H1 (cell line): ENCODE measurements at regions of chr11 and their contacts with region 1.

Region 1: GRCh38 chr11:19903620-19904069 is 191.0 kb downstream of the NAV2 start:
- DNase-seq: peak; percentile 23 to 90
- H3K4me3 ChIP-seq: no peak overlapping the region
- H3K27ac ChIP-seq: no peak overlapping the region
- H3K4me1 ChIP-seq: peaks cover 0 to 8% (median 4%) of the 10 kb centered on the region in 4 experiments; a peak in 4 of 7 replicates
- H3K27me3 ChIP-seq: no peaks in the 10 kb centered on the region
- CTCF ChIP-seq: peak; percentile 54 to 87 (median 79)
- EP300 ChIP-seq: no peak
- POLR2A ChIP-seq: no peak
- RAD21 ChIP-seq: peak; percentile 93 to 95

Region 2: DNA sequence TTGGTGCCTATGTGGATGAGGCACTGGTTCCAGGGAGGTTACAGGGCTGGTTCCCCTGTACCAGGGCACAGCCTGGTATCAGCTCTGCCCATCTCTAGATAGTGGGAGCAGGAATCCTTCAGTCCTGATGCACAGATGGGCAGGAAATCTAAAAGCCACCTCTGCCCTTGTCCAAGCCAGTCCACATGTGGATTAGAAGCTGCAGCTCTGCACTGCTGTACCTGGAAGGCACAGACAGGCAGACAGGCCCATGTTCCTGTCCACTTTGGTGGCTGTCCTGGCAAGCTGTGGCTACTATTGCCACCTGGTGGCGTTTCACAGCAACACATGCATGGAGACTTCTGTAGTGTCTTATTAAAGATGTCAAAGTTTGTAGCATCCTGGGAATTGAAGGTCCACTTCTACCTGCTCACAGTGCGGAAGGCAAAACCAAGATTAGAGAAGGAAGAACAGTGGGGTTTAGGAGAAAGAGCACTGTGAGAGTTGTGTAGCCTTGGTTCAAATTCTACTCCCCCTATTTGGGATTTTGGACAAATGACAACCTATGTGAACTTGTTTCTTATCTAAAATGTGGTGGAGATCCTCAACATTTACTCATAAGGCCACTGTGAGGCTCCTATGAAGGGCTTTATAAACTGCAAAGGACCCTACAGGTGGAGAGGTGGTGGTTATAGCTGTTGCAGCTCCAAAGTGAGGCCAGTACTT is 160.9 kb before region 1 on chr11:
- CTCF ChIA-PET with region 1: interaction called, 30 read pairs
- POLR2A ChIA-PET with region 1: no interaction called
- DNase-seq: peak; percentile 49 to 84
- H3K4me3 ChIP-seq: no peak overlapping the region
- H3K27ac ChIP-seq: no peak overlapping the region
- H3K4me1 ChIP-seq: peaks cover 0 to 12% (median 3%) of the 10 kb centered on the region in 4 experiments; a peak in 2 of 7 replicates
- H3K27me3 ChIP-seq: no peaks in the 10 kb centered on the region
- CTCF ChIP-seq: peak; percentile 76 to 97 (median 91)
- EP300 ChIP-seq: no peak
- POLR2A ChIP-seq: no peak
- RAD21 ChIP-seq: peak; percentile 93 to 97

Region 3: DNA sequence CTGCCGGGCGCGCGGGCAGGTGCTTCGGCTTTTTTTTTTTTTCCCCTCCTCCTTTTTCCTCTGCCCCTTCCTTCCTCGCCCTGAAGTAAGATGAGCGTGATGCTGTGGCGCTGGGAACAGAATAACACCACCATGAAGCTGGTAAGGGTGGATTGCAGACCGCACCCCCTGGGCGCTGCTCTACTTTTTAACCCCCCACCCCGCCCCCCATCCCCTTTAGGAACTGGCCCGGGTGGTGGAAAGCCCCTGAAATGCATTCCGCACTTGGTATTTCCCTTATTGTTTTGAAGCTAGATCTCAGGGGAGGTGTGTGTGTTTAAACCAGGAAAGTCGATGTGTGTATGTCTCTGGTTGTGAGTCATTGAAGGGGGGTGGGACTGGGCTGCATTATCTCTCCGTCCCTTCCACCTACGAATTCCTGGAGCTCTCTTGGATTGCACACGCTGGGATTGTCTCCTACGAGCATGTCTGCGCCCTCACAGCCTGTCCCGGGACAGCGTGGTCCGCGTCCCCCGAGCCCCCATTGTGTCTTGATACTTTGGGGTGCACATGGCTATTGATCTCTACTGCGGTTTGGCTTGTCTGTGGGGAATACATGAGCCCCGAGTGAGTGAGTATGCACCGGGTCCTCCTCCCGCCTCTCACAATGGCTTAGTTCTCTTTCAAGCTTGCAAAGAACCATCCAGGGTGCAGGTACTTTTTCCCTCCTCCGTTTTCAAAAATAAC is 126.1 kb before region 1 on chr11:
- CTCF ChIA-PET with region 1: interaction called, 15 read pairs
- POLR2A ChIA-PET with region 1: no interaction called
- DNase-seq: no peak
- H3K4me3 ChIP-seq: peak overlapping the region; percentile 84 to 96 (median 90)
- H3K27ac ChIP-seq: peak overlapping the region; percentile 92
- H3K4me1 ChIP-seq: peaks cover 17 to 43% (median 37%) of the 10 kb centered on the region in 4 experiments
- H3K27me3 ChIP-seq: no peaks in the 10 kb centered on the region
- CTCF ChIP-seq: no peak
- EP300 ChIP-seq: peak in 1 of 2 experiments; percentile 7; a peak in 1 of 3 replicates
- POLR2A ChIP-seq: peak; percentile 78 to 81
- RAD21 ChIP-seq: no peak

Region 4: DNA sequence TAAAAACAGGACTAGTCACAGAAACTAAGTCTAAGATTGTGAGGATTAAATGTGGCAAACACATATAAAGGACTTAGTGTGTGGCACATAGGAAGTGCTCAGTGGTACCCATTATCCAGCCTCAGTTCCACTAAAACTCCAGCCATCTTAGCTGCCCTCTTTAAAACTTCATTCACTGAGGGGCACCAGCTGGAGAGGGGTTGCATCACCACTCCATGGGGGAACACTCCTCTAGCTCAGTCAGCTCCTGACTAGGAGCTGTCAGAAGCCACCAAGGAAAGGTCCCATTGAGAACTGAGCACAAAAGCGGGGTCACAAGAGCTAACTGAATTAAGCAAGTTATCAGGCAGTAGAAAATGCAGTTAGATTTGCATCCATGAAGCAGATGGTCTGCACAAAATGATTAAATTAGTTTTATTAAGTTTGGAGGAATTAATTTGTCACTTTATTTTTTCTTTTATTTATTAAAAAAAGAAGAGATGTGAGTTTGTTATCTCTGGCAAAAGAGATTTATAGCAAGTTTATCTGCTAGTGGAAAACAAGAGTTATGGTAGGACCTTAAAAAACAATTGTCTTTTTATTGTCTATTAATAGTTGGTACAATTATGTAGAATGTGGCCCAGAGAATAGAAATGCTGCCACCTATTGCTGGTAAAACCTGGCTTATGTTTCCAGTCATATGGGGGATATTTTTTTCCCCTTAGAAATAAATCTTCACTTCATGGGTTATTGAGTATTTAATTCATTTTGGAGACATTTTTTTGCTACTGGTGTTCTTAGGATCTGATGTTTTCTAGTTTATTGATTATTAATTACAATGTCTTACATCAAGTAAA is 95.4 kb before region 1 on chr11:
- CTCF ChIA-PET with region 1: interaction called, 88 read pairs
- POLR2A ChIA-PET with region 1: no interaction called
- DNase-seq: no peak
- H3K4me3 ChIP-seq: no peak overlapping the region
- H3K27ac ChIP-seq: no peak overlapping the region
- H3K4me1 ChIP-seq: peaks cover 11 to 31% (median 21%) of the 10 kb centered on the region in 4 experiments; a peak in 6 of 7 replicates
- H3K27me3 ChIP-seq: no peaks in the 10 kb centered on the region
- CTCF ChIP-seq: no peak
- EP300 ChIP-seq: no peak
- POLR2A ChIP-seq: no peak
- RAD21 ChIP-seq: no peak

Region 5: DNA sequence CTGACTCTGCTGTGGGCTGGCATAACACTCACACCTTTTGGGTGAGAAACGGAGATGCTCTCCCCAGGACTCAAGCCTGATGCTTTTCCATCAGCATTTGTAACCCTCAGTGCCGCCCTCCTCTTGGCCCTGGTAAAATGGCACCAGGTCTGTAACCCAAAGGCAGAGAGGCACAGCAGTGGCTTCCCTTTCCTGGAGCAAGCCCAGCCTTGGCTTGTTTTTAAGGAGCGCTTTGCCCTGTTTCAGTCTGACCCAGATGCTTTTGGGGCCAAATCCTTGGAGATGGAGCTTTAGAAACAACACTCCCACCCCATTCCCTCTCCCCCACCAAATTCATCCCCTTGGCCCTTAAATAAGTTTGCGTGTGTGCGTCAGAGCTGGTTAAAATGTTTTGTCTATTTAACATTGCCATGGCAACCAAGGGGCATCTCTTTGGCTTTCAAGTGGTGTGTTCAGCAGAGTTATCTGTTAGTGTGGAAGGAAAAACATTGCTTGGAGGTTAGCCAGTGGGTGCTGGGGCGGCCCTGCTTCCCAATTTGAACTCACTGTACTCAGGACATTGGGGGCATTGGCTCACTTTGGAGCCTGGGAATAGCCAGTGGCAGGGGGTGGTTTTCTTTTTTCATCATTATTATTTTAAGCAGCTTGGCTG is 56.9 kb before region 1 on chr11:
- CTCF ChIA-PET with region 1: interaction called, 24 read pairs
- POLR2A ChIA-PET with region 1: no interaction called
- DNase-seq: no peak
- H3K4me3 ChIP-seq: no peak overlapping the region
- H3K27ac ChIP-seq: no peak overlapping the region
- H3K4me1 ChIP-seq: peaks cover 0 to 12% (median 4%) of the 10 kb centered on the region in 4 experiments; a peak in 4 of 7 replicates
- H3K27me3 ChIP-seq: no peaks in the 10 kb centered on the region
- CTCF ChIP-seq: no peak
- EP300 ChIP-seq: no peak
- POLR2A ChIP-seq: no peak
- RAD21 ChIP-seq: no peak

Region 6: DNA sequence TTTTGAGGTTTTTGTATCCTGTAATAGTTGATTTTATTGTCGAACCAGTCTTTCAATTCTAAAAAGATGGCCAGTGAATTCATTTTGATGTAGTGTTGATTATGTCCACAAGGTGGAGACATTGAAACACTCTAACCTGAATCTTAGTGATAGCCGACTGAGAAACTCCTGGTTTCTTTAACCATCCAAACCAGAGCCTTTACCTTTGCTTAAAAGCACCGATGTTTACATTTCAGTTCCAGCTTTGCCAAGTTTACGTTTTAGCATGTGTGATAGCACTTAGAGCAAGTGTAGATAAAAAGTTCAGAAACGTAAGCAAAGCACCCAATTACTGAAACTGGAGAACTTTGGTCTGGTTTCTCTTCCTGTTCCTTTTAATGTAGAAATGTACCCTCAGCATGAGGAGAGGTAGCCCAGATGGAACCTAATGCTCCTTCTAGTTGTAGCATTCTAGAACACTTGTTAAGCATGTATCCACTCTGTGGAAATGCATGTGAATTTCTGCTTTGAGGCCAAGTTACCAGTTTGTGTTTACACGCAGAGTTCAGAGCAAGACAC is 48.0 kb after region 1 on chr11:
- CTCF ChIA-PET with region 1: interaction called, 10 read pairs
- POLR2A ChIA-PET with region 1: no interaction called
- DNase-seq: no peak
- H3K4me3 ChIP-seq: no peak overlapping the region
- H3K27ac ChIP-seq: no peak overlapping the region
- H3K4me1 ChIP-seq: peaks cover 8 to 21% (median 20%) of the 10 kb centered on the region in 4 experiments; a peak in 6 of 7 replicates
- H3K27me3 ChIP-seq: no peaks in the 10 kb centered on the region
- CTCF ChIP-seq: peak in 2 of 3 experiments; percentile 43 to 65; a peak in 3 of 4 replicates
- EP300 ChIP-seq: no peak
- POLR2A ChIP-seq: no peak
- RAD21 ChIP-seq: peak; percentile 74 to 80

Region 7: DNA sequence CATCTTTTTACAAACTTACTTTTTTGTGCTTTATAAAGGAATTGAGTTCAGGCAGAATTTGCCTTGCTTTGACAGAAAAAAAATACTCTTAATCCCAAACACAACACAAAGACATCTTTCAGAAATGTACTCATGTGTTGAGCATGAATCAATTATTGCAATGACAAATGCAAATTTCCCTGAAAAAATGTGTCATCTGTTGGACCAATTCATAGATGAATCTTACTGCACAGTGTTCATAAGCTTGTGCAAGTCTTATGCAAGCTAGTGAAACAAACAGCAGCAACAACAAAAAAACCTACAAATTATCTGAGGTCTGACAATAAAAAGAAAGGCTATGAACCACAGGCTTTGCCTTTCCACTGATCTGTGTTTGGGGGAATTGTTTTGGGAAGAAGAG is 417.5 kb after region 1 on chr11:
- CTCF ChIA-PET with region 1: no interaction called
- POLR2A ChIA-PET with region 1: no interaction called
- DNase-seq: no peak
- H3K4me3 ChIP-seq: no peak overlapping the region
- H3K27ac ChIP-seq: no peak overlapping the region
- H3K4me1 ChIP-seq: no peaks in the 10 kb centered on the region
- H3K27me3 ChIP-seq: no peaks in the 10 kb centered on the region
- CTCF ChIP-seq: no peak
- EP300 ChIP-seq: no peak
- POLR2A ChIP-seq: no peak
- RAD21 ChIP-seq: no peak

Region 8: DNA sequence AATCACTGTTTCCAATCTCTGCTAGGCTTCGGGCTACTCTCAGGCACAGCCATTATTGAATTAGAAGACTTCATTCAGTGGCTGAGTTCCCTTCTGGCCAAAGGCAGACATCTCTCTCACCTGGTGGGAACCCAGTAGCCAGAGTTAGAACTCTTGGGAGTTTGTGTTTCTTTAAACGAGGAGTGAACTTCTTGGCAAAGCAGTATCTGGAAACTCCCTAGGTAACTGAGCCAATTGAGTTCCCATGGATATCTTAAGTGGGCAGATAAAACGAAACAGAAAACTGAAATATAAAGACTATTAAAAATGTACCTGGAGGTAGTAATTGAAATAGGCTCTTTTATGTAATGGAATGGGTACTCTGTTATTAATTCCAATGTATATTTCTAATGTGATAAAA is 891.4 kb after region 1 on chr11:
- CTCF ChIA-PET with region 1: no interaction called
- POLR2A ChIA-PET with region 1: no interaction called
- DNase-seq: no peak
- H3K4me3 ChIP-seq: no peak overlapping the region
- H3K27ac ChIP-seq: no peak overlapping the region
- H3K4me1 ChIP-seq: peaks cover 0 to 2% (median 0%) of the 10 kb centered on the region in 4 experiments; a peak in 1 of 7 replicates
- H3K27me3 ChIP-seq: no peaks in the 10 kb centered on the region
- CTCF ChIP-seq: no peak
- EP300 ChIP-seq: no peak
- POLR2A ChIP-seq: no peak
- RAD21 ChIP-seq: no peak